GM12878 (cell line): ENCODE measurements at regions of chr2 and their contacts with region 1.

Region 1: DNA sequence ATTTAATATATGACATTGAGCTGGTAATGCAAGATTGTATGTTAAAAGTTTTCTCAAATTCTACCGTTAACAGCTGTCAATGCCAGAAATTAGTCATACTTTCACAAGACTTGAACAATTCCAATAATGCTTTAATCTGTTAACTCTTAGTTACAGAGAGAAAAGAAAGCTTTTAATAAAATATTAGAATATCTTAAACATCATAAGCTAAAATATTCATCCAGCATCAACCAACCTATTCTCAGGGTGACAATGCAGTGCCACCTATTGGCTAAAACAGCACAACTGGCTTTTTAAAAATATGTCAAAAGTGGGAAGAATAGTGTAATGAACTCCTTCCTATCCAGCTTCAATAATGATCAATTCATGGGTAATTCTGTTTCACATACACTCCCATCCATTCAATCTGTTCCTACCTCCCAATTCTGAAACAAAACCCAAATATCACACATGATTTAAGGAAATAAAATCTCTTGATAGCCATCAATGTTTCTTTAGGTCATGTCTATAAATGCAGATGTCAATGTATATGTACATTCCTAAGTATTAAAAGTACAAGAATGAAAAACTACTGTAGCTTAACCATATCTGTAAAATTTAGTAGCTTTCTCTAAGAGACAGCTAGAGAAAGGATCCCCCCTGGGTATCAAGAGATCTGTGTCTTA is 79.8 kb upstream of the CCDC141 start:
- DNase-seq: no peak
- ATAC-seq: peak; percentile 79
- H3K4me3 ChIP-seq: no peak overlapping the region
- H3K27ac ChIP-seq: no peak overlapping the region
- H3K4me1 ChIP-seq: no peaks in the 10 kb centered on the region
- H3K27me3 ChIP-seq: no peaks in the 10 kb centered on the region
- CTCF ChIP-seq: peak; percentile 57 to 76 (median 63); a peak in 5 of 6 replicates
- EP300 ChIP-seq: no peak
- POLR2A ChIP-seq: no peak
- RAD21 ChIP-seq: peak; percentile 90

Region 2: GRCh38 chr2:178761759-178762371 is 367.8 kb before region 1 on chr2:
- CTCF ChIA-PET with region 1: interaction called, 17 read pairs
- POLR2A ChIA-PET with region 1: no interaction called
- RAD21 ChIA-PET with region 1: interaction called, 11 read pairs
- SMC1A ChIA-PET with region 1: interaction called, 13 read pairs
- in situ Hi-C with region 1: no loop called
- intact Hi-C with region 1: no loop called
- DNase-seq: peak; percentile 12
- ATAC-seq: peak; percentile 83
- H3K4me3 ChIP-seq: no peak overlapping the region
- H3K27ac ChIP-seq: no peak overlapping the region
- H3K4me1 ChIP-seq: no peaks in the 10 kb centered on the region
- H3K27me3 ChIP-seq: no peaks in the 10 kb centered on the region
- CTCF ChIP-seq: peak; percentile 68 to 79 (median 69)
- EP300 ChIP-seq: no peak
- POLR2A ChIP-seq: no peak
- RAD21 ChIP-seq: peak; percentile 91

Region 3: DNA sequence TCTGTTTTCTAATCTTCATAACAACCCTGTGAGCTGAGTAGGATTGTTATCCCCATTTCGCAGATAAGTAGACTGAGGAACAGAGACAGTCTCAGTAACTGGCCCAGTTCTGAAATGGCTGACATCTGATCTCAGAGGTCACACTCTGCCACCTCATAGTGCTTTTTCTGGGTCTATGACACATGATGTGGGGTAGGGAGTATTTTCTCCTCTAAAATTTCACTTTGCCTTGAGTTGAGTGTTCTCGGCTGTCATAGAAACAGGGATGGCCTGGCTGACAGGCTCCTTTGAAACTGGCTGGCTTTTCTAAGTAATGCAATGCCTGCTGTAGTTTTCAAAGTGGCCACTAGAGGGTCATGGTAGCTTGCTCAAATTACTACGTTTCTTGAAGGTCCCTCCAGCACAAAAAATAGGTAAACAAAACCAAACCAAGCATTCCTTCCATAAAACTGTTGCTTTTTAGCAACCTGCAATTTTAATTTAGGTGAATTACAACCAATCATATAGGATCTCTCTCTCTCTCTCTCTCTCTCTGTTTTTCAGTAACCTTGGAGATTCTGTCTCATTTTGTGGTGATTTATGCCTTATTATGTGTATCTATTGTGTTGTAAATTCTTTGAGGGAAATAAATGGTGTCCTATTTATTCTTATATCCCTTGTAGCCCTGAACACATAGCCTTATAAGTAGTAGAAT is 238.3 kb before region 1 on chr2:
- CTCF ChIA-PET with region 1: interaction called, 191 read pairs
- POLR2A ChIA-PET with region 1: interaction called, 6 read pairs
- RAD21 ChIA-PET with region 1: interaction called, 119 read pairs
- SMC1A ChIA-PET with region 1: interaction called, 151 read pairs
- in situ Hi-C with region 1: loop called (anchors 10 kb)
- intact Hi-C with region 1: loop called (anchors 1 kb)
- DNase-seq: peak; percentile 33
- ATAC-seq: peak; percentile 94
- H3K4me3 ChIP-seq: no peak overlapping the region
- H3K27ac ChIP-seq: no peak overlapping the region
- H3K4me1 ChIP-seq: no peaks in the 10 kb centered on the region
- H3K27me3 ChIP-seq: no peaks in the 10 kb centered on the region
- CTCF ChIP-seq: peak; percentile 87 to 91 (median 90)
- EP300 ChIP-seq: no peak
- POLR2A ChIP-seq: no peak
- RAD21 ChIP-seq: peak; percentile 89

Region 4: GRCh38 chr2:178920916-178921513 is 208.7 kb before region 1 on chr2:
- CTCF ChIA-PET with region 1: interaction called, 100 read pairs
- POLR2A ChIA-PET with region 1: no interaction called
- RAD21 ChIA-PET with region 1: interaction called, 34 read pairs
- SMC1A ChIA-PET with region 1: interaction called, 78 read pairs
- in situ Hi-C with region 1: no loop called
- intact Hi-C with region 1: no loop called
- DNase-seq: no peak
- ATAC-seq: no peak
- H3K4me3 ChIP-seq: no peak overlapping the region
- H3K27ac ChIP-seq: no peak overlapping the region
- H3K4me1 ChIP-seq: no peaks in the 10 kb centered on the region
- H3K27me3 ChIP-seq: no peaks in the 10 kb centered on the region
- CTCF ChIP-seq: no peak
- EP300 ChIP-seq: no peak
- POLR2A ChIP-seq: no peak
- RAD21 ChIP-seq: no peak

Region 5: GRCh38 chr2:178998539-178998938 is 131.2 kb before region 1 on chr2:
- CTCF ChIA-PET with region 1: interaction called, 19 read pairs
- POLR2A ChIA-PET with region 1: no interaction called
- RAD21 ChIA-PET with region 1: interaction called, 3 read pairs
- SMC1A ChIA-PET with region 1: interaction called, 8 read pairs
- in situ Hi-C with region 1: no loop called
- intact Hi-C with region 1: no loop called
- DNase-seq: no peak
- ATAC-seq: no peak
- H3K4me3 ChIP-seq: no peak overlapping the region
- H3K27ac ChIP-seq: no peak overlapping the region
- H3K4me1 ChIP-seq: peaks cover 9% of the 10 kb centered on the region
- H3K27me3 ChIP-seq: no peaks in the 10 kb centered on the region
- CTCF ChIP-seq: no peak
- EP300 ChIP-seq: no peak
- POLR2A ChIP-seq: no peak
- RAD21 ChIP-seq: no peak

Region 6: DNA sequence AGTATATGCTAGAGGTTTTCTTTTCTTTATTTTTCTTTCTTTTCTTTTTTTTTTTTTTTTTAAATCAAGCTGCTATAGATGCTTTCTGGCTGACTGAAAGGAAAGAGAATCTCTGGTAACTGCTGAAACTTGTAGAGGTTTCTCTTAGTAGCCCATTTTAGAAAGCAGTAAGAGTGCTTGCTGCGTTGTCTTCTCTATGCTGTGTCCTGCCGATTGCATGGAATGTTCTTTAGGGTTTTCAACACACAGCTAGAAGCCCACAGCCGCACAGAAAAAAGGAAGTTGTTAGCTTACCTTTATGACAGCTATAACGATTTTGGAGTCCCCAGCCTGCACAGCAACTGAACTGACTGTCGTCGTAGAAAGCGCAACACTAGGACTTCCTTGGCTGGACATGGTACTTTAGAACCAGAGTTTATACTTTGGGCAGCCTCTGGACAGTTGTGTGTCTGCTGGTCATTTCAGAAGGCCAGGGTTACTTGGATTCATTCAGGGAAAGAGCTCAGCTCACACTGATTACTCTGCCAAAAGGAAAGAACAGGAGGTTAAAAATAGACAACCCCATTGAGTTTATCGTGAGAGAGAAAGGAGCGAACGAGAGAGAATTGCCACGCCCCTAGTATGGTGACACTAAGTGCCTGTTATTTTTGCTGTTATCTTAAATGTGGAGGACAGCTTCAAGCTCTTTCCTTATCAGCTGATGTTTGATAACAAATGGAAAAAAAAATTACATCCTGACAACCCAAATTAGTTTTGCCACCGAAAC is 80.0 kb before region 1 on chr2 and contains the start of gene CCDC141:
- CTCF ChIA-PET with region 1: interaction called, 31 read pairs
- POLR2A ChIA-PET with region 1: interaction called, 3 read pairs
- RAD21 ChIA-PET with region 1: interaction called, 45 read pairs
- SMC1A ChIA-PET with region 1: interaction called, 19 read pairs
- in situ Hi-C with region 1: no loop called
- intact Hi-C with region 1: no loop called
- DNase-seq: peak; percentile 37
- ATAC-seq: peak; percentile 77
- H3K4me3 ChIP-seq: peak within 1 kb of the TSS; percentile 68
- H3K27ac ChIP-seq: peak within 1 kb of the TSS; percentile 69
- H3K4me1 ChIP-seq: peaks cover 31% of the 10 kb centered on the region
- H3K27me3 ChIP-seq: no peaks in the 10 kb centered on the region
- CTCF ChIP-seq: no peak
- EP300 ChIP-seq: 0 out of 4 replicates have a peak, but pooled peaks of 1 of the 2 experiments have one; percentile 15
- POLR2A ChIP-seq: peak; percentile 35; the same call in 1 of the 2 replicates
- RAD21 ChIP-seq: no peak
- polyA plus RNA-seq, gene CCDC141: 0.84 to 2.1 TPM

Region 7: DNA sequence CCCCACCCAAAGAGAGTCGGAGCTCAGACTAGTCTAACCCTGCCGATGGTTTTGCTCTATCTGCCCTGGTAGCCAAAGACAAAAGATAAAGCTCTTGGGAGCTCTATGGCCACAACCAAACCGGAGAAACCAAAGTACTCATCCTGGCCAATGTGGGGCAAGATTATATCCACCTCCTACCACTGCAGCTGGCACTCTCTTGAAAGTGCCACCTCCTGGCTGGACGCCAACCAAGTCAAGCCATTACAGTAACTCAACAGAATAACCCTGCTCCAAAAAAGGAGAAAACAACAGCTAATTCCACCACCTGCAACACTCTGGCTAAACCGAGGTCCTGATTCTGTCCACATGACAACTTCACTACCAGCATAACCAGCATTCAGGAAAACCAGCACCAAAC is 77.3 kb after region 1 on chr2:
- CTCF ChIA-PET with region 1: no interaction called
- POLR2A ChIA-PET with region 1: no interaction called
- RAD21 ChIA-PET with region 1: no interaction called
- SMC1A ChIA-PET with region 1: no interaction called
- in situ Hi-C with region 1: no loop called
- intact Hi-C with region 1: no loop called
- DNase-seq: no peak
- ATAC-seq: no peak
- H3K4me3 ChIP-seq: no peak overlapping the region
- H3K27ac ChIP-seq: no peak overlapping the region
- H3K4me1 ChIP-seq: no peaks in the 10 kb centered on the region
- H3K27me3 ChIP-seq: no peaks in the 10 kb centered on the region
- CTCF ChIP-seq: no peak
- EP300 ChIP-seq: no peak
- POLR2A ChIP-seq: no peak
- RAD21 ChIP-seq: no peak